B cell (primary cell): ENCODE measurements at regions of chr12 and their contacts with region 1.

Region 1: DNA sequence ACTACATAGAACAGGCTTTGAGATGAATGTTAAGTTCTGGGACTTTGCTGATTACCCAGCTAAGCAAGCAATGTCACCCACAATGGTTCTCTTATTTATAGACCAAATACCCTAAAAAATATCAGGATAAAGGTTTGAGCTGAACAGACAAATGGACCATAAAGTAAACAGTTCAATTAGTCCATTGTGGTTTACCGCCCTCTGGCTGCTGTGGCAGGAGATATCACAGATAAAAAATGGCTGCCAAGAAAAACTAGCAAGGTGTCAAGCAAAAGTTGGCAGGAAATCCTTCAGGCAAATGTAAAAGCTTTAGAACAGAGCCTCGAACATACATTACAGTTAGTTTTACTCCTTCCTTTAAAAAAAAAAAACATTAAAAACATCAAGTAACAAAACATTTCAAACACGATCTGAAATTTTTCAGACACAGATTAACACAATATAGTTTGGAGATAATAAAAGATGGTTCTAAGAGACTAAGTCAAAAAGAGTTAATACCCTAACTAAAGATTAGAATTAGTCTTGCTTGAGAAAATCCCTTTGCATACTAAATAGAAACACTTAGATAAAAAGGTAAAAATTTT is 41.3 kb downstream of the MED13L start:
- DNase-seq: peak; percentile 72
- ATAC-seq: peak; percentile 66
- H3K4me3 ChIP-seq: no peak overlapping the region
- H3K4me3 Mint-ChIP-seq: no peak overlapping the region
- H3K27ac ChIP-seq: peak overlapping the region in 1 of 2 donors; percentile 60
- H3K27ac Mint-ChIP-seq: peak overlapping the region; percentile 43
- H3K4me1 ChIP-seq: peaks cover 4 to 12% of the 10 kb centered on the region in 2 donors
- H3K4me1 Mint-ChIP-seq: peaks cover 38% of the 10 kb centered on the region
- H3K27me3 ChIP-seq: no peaks in the 10 kb centered on the region
- H3K27me3 Mint-ChIP-seq: no peaks in the 10 kb centered on the region
- CTCF ChIP-seq: peak; percentile 77

Region 2: GRCh38 chr12:116015525-116015924 is 220.7 kb before region 1 on chr12:
- CTCF ChIA-PET with region 1: interaction called, 10 read pairs
- POLR2A ChIA-PET with region 1: no interaction called
- intact Hi-C with region 1: loop called (anchors 1 kb)
- DNase-seq: peak; percentile 27
- ATAC-seq: peak; percentile 49
- H3K4me3 ChIP-seq: no peak overlapping the region
- H3K4me3 Mint-ChIP-seq: no peak overlapping the region
- H3K27ac ChIP-seq: no peak overlapping the region
- H3K27ac Mint-ChIP-seq: no peak overlapping the region
- H3K4me1 ChIP-seq: no peaks in the 10 kb centered on the region
- H3K4me1 Mint-ChIP-seq: no peaks in the 10 kb centered on the region
- H3K27me3 ChIP-seq: no peaks in the 10 kb centered on the region
- H3K27me3 Mint-ChIP-seq: no peaks in the 10 kb centered on the region
- CTCF ChIP-seq: peak; percentile 27

Region 3: GRCh38 chr12:116066381-116067230 is 169.6 kb before region 1 on chr12:
- CTCF ChIA-PET with region 1: interaction called, 15 read pairs
- POLR2A ChIA-PET with region 1: no interaction called
- intact Hi-C with region 1: loop called (anchors 1 kb)
- DNase-seq: peak; percentile 73
- ATAC-seq: peak; percentile 74
- H3K4me3 ChIP-seq: no peak overlapping the region
- H3K4me3 Mint-ChIP-seq: no peak overlapping the region
- H3K27ac ChIP-seq: no peak overlapping the region
- H3K27ac Mint-ChIP-seq: peak overlapping the region; percentile 21
- H3K4me1 ChIP-seq: peaks cover 8% of the 10 kb centered on the region in 2 donors
- H3K4me1 Mint-ChIP-seq: peaks cover 42% of the 10 kb centered on the region
- H3K27me3 ChIP-seq: no peaks in the 10 kb centered on the region
- H3K27me3 Mint-ChIP-seq: no peaks in the 10 kb centered on the region
- CTCF ChIP-seq: peak; percentile 97

Region 4: GRCh38 chr12:116194935-116195431 is 41.3 kb before region 1 on chr12:
- CTCF ChIA-PET with region 1: interaction called, 4 read pairs
- POLR2A ChIA-PET with region 1: no interaction called
- intact Hi-C with region 1: loop called (anchors 5 kb)
- DNase-seq: peak; percentile 84
- ATAC-seq: peak; percentile 84
- H3K4me3 ChIP-seq: peak overlapping the region in 4 of 5 experiments; percentile 4 to 23 (median 14)
- H3K4me3 Mint-ChIP-seq: peak overlapping the region; percentile 79
- H3K27ac ChIP-seq: peak overlapping the region; percentile 76 to 80
- H3K27ac Mint-ChIP-seq: peak overlapping the region; percentile 92
- H3K4me1 ChIP-seq: peaks cover 28 to 45% of the 10 kb centered on the region in 2 donors
- H3K4me1 Mint-ChIP-seq: peaks cover 62% of the 10 kb centered on the region
- H3K27me3 ChIP-seq: no peaks in the 10 kb centered on the region
- H3K27me3 Mint-ChIP-seq: no peaks in the 10 kb centered on the region
- CTCF ChIP-seq: peak; percentile 21

Region 5: GRCh38 chr12:116662612-116663144 is 426.4 kb after region 1 on chr12:
- CTCF ChIA-PET with region 1: no interaction called
- POLR2A ChIA-PET with region 1: no interaction called
- intact Hi-C with region 1: no loop called
- DNase-seq: no peak
- ATAC-seq: no peak
- H3K4me3 ChIP-seq: no peak overlapping the region
- H3K4me3 Mint-ChIP-seq: no peak overlapping the region
- H3K27ac ChIP-seq: no peak overlapping the region
- H3K27ac Mint-ChIP-seq: no peak overlapping the region
- H3K4me1 ChIP-seq: no peaks in the 10 kb centered on the region
- H3K4me1 Mint-ChIP-seq: peaks cover 5% of the 10 kb centered on the region
- H3K27me3 ChIP-seq: peaks cover 0 to 24% (median 7%) of the 10 kb centered on the region in 4 experiments
- H3K27me3 Mint-ChIP-seq: peaks cover 44% of the 10 kb centered on the region
- CTCF ChIP-seq: no peak